CD8-positive, alpha-beta T cell (primary cell): ENCODE measurements at regions of chr22 and their contacts with region 1.

Region 1: GRCh38 chr22:19479357-19480172 is at the start of gene CDC45:
- DNase-seq: peak; percentile 86 to 98 (median 94)
- ATAC-seq: peak; percentile 92
- H3K4me3 ChIP-seq: peak within 1 kb of the TSS; percentile 69 to 80
- H3K4me3 Mint-ChIP-seq: peak within 1 kb of the TSS; percentile 96
- H3K27ac ChIP-seq: peak within 1 kb of the TSS; percentile 97
- H3K27ac Mint-ChIP-seq: peak within 1 kb of the TSS; percentile 98
- H3K4me1 ChIP-seq: peaks cover 15% of the 10 kb centered on the region
- H3K4me1 Mint-ChIP-seq: peaks cover 36% of the 10 kb centered on the region
- H3K27me3 ChIP-seq: no peaks in the 10 kb centered on the region
- H3K27me3 Mint-ChIP-seq: no peaks in the 10 kb centered on the region
- CTCF ChIP-seq: no peak
- total RNA-seq, gene CDC45: 1.8 to 2.3 TPM

Region 2: GRCh38 chr22:19109198-19110067 is 370.1 kb before region 1 on chr22:
- CTCF ChIA-PET with region 1: interaction called, 4 read pairs
- POLR2A ChIA-PET with region 1: interaction called, 3 read pairs
- intact Hi-C with region 1: loop called (anchors 2 to 10 kb)
- DNase-seq: peak; percentile 18 to 87 (median 59)
- ATAC-seq: peak; percentile 83
- H3K4me3 ChIP-seq: peak overlapping the region; percentile 33 to 54
- H3K4me3 Mint-ChIP-seq: peak overlapping the region; percentile 81
- H3K27ac ChIP-seq: peak overlapping the region; percentile 70 to 87
- H3K27ac Mint-ChIP-seq: peak overlapping the region; percentile 97
- H3K4me1 ChIP-seq: peaks cover 60% of the 10 kb centered on the region
- H3K4me1 Mint-ChIP-seq: peaks cover 74% of the 10 kb centered on the region
- H3K27me3 ChIP-seq: no peaks in the 10 kb centered on the region
- H3K27me3 Mint-ChIP-seq: no peaks in the 10 kb centered on the region
- CTCF ChIP-seq: no peak

Region 3: DNA sequence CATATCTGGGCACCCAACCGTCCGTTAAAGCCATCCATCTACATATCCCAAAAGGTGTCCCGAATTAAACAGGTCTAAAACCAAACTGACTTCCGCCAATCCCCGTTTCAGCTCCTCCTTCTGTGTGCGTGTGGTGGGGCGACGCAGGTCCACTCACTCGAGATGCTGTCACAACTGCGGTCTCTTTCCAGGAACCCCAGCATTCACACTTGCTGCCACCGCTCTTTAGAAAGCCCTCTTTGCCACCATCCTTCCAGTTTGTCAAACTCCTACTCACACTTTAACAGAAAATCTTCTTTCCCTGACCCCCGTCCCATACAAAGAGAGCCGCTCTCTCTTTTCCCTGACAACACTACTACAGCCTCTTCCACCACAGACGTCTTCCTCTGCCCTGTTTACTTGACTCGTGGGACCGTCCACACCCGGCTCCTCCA is 335.6 kb before region 1 on chr22:
- CTCF ChIA-PET with region 1: interaction called, 5 read pairs
- POLR2A ChIA-PET with region 1: interaction called, 4 read pairs
- intact Hi-C with region 1: loop called in 1 of 2 experiments (anchors 1 kb)
- DNase-seq: peak in 5 of 9 experiments; percentile 28 to 71 (median 51)
- ATAC-seq: peak; percentile 14
- H3K4me3 ChIP-seq: peak overlapping the region; percentile 97 to 99
- H3K4me3 Mint-ChIP-seq: peak overlapping the region; percentile 98
- H3K27ac ChIP-seq: peak overlapping the region; percentile 95 to 98
- H3K27ac Mint-ChIP-seq: peak overlapping the region; percentile 98
- H3K4me1 ChIP-seq: peaks cover 11% of the 10 kb centered on the region
- H3K4me1 Mint-ChIP-seq: peaks cover 21% of the 10 kb centered on the region
- H3K27me3 ChIP-seq: peaks cover 2% of the 10 kb centered on the region in 2 experiments
- H3K27me3 Mint-ChIP-seq: peaks cover 11% of the 10 kb centered on the region
- CTCF ChIP-seq: no peak

Region 4: GRCh38 chr22:19291580-19292457 is 187.7 kb before region 1 on chr22 and contains the start of gene CLTCL1:
- CTCF ChIA-PET with region 1: no interaction called
- POLR2A ChIA-PET with region 1: no interaction called
- intact Hi-C with region 1: loop called (anchors 2 kb)
- DNase-seq: peak; percentile 40 to 83 (median 67)
- ATAC-seq: peak; percentile 81
- H3K4me3 ChIP-seq: peak within 1 kb of the TSS; percentile 82 to 92
- H3K4me3 Mint-ChIP-seq: peak within 1 kb of the TSS; percentile 93
- H3K27ac ChIP-seq: peak within 1 kb of the TSS; percentile 38 to 55
- H3K27ac Mint-ChIP-seq: peak within 1 kb of the TSS; percentile 23
- H3K4me1 ChIP-seq: peaks cover 18% of the 10 kb centered on the region
- H3K4me1 Mint-ChIP-seq: peaks cover 24% of the 10 kb centered on the region
- H3K27me3 ChIP-seq: no peaks in the 10 kb centered on the region
- H3K27me3 Mint-ChIP-seq: peaks cover 21% of the 10 kb centered on the region
- CTCF ChIP-seq: no peak
- total RNA-seq, gene CLTCL1: 0.43 to 0.69 TPM

Region 5: DNA sequence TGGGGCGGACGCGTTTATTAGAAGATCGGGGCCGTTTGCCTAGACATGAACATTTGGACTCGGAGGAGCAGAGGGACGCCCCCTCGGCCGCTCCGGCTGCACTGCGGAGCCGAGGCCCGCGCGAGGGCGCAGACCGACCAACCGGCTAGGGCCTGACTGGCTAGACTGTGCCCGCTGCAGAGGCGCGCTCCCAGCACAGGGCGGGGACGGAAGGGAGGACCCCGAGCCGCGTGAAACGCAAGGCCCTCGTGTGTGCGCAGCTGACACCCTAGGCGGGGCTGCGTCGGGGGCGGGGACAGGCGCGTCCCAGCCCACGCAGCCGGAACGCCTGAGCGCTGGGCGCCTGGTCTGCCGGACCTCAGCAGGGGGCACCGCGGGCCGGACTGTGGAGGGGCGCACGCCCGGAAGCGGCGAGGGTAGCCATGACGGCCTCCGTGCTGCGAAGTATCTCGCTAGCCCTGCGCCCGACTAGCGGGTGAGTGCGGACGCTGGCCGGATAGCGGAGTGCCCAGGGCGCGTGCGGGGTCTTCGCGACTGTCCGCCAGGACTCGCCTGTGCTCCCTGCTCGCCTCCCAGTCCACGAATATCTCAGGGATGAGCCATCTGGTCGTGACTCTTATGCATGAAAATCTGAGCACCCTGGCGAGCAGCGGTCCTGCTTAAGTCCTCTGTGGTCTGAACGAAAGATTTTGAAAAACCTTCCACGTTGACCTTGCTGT is 47.3 kb before region 1 on chr22 and contains the start of gene MRPL40:
- CTCF ChIA-PET with region 1: no interaction called
- POLR2A ChIA-PET with region 1: interaction called, 19 read pairs
- intact Hi-C with region 1: loop called (anchors 1 kb)
- DNase-seq: peak; percentile 61 to 93 (median 88)
- ATAC-seq: peak; percentile 82
- H3K4me3 ChIP-seq: peak within 1 kb of the TSS; percentile 73 to 88
- H3K4me3 Mint-ChIP-seq: peak within 1 kb of the TSS; percentile 91
- H3K27ac ChIP-seq: peak within 1 kb of the TSS; percentile 90 to 96
- H3K27ac Mint-ChIP-seq: peak within 1 kb of the TSS; percentile 93
- H3K4me1 ChIP-seq: peaks cover 25% of the 10 kb centered on the region
- H3K4me1 Mint-ChIP-seq: peaks cover 42% of the 10 kb centered on the region
- H3K27me3 ChIP-seq: no peaks in the 10 kb centered on the region
- H3K27me3 Mint-ChIP-seq: no peaks in the 10 kb centered on the region
- CTCF ChIP-seq: no peak
- total RNA-seq, gene MRPL40: 9.9 to 10.5 TPM

Region 6: DNA sequence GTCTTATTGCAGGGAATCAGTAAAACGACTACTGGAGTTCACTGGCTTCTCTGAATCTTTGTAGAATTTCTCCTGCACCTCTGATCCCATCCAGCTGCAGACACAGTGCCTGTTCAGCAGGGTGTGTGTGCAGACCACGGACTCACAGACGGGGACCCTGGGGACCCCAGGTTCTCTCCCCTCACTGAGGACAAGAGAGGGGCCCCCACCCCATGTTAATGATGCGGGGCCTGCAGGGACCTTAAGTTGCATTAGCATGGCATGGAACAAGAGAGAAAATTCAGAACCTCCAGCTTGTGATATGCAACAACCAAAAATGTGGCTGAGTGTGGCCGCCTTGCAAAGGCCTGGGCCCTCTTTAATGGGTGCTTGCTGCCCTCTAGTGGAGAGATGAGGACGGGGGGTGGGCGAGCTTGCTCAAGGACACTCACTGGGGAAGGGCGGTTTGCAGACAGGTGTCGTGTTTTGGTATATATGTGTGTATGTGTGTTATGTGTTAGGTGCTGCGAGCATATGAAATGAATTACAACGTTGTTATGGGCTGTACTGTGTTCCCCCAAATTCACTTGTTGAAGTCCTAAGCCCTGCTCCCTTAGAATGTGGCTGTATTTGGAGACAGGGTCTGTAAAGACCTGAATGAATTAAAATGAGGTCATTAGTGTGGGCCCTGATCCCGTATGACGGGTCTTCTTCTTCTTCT is 150.3 kb after region 1 on chr22:
- CTCF ChIA-PET with region 1: interaction called, 19 read pairs
- POLR2A ChIA-PET with region 1: no interaction called
- intact Hi-C with region 1: loop called (anchors 1 to 5 kb)
- DNase-seq: peak; percentile 74 to 92 (median 84)
- ATAC-seq: peak; percentile 94
- H3K4me3 ChIP-seq: no peak overlapping the region
- H3K4me3 Mint-ChIP-seq: no peak overlapping the region
- H3K27ac ChIP-seq: no peak overlapping the region
- H3K27ac Mint-ChIP-seq: no peak overlapping the region
- H3K4me1 ChIP-seq: peaks cover 3% of the 10 kb centered on the region
- H3K4me1 Mint-ChIP-seq: peaks cover 3% of the 10 kb centered on the region
- H3K27me3 ChIP-seq: no peaks in the 10 kb centered on the region
- H3K27me3 Mint-ChIP-seq: peaks cover 1% of the 10 kb centered on the region
- CTCF ChIP-seq: peak; percentile 78

Region 7: DNA sequence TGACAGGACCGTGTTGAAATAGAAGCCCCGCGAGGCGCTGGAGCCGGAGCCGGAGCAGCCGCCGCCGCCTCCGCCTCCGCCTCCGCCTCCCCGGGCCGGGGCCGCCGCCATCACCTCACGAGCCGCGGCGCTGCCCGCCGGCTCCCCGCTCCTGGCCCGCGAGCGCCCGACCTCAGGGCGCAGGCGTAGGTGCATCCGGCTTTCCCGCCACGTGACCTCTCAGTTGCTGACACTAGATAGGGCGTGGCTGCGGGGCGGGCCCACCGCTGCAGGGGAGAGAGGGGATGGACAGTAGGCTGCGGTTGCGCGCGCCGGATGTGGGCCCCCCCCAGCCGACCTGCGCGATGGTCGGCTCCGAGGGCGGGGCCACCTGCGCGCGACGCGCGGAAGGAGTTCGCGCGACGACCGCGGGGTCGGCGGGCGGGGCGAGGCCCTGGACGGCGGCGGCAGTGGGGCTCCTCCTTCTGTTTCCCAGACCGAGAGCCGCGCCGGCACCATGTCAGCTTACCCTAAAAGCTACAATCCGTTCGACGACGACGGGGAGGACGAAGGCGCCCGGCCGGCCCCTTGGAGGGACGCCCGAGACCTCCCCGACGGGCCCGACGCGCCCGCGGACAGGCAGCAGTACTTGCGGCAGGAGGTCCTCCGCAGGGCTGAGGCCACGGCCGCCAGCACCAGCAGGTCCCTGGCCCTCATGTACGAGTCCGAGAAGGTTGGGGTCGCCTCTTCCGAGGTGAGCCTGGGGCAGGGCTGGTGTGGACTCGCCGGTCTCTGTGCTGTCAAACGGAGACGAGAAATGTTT is 1379.3 kb after region 1 on chr22 and contains the starts of genes PI4KA and SNAP29:
- CTCF ChIA-PET with region 1: no interaction called
- POLR2A ChIA-PET with region 1: no interaction called
- intact Hi-C with region 1: loop called in 1 of 2 experiments (anchors 5 kb)
- DNase-seq: peak; percentile 94 to 99 (median 98)
- ATAC-seq: peak; percentile 88
- H3K4me3 ChIP-seq: peak within 1 kb of the TSS; percentile 63 to 78
- H3K4me3 Mint-ChIP-seq: peak within 1 kb of the TSS; percentile 91
- H3K27ac ChIP-seq: peak within 1 kb of the TSS; percentile 72 to 83
- H3K27ac Mint-ChIP-seq: peak within 1 kb of the TSS; percentile 88
- H3K4me1 ChIP-seq: peaks cover 24% of the 10 kb centered on the region
- H3K4me1 Mint-ChIP-seq: peaks cover 65% of the 10 kb centered on the region
- H3K27me3 ChIP-seq: no peaks in the 10 kb centered on the region
- H3K27me3 Mint-ChIP-seq: no peaks in the 10 kb centered on the region
- CTCF ChIP-seq: no peak
- total RNA-seq, gene PI4KA: 154 to 155 TPM
- total RNA-seq, gene SNAP29: 16.5 to 17.1 TPM